Motor neuron (in vitro differentiated cells): ENCODE measurements at regions of chr4 and their contacts with region 1.

Region 1: GRCh38 chr4:13559413-13559812 is 15.1 kb upstream of the NKX3-2 start:
- ATAC-seq: no peak
- H3K4me3 ChIP-seq: no peak overlapping the region
- H3K27ac ChIP-seq: no peak overlapping the region
- H3K4me1 ChIP-seq: no peaks in the 10 kb centered on the region

Region 2: GRCh38 chr4:12293906-12294525 is 1265.4 kb before region 1 on chr4:
- in situ Hi-C with region 1: no loop called
- ATAC-seq: no peak
- H3K4me3 ChIP-seq: no peak overlapping the region
- H3K27ac ChIP-seq: no peak overlapping the region
- H3K4me1 ChIP-seq: no peaks in the 10 kb centered on the region

Region 3: GRCh38 chr4:12573716-12574115 is 985.7 kb before region 1 on chr4:
- in situ Hi-C with region 1: no loop called
- ATAC-seq: no peak
- H3K4me3 ChIP-seq: no peak overlapping the region
- H3K27ac ChIP-seq: no peak overlapping the region
- H3K4me1 ChIP-seq: peaks cover 0 to 3% of the 10 kb centered on the region in 2 donors

Region 4: DNA sequence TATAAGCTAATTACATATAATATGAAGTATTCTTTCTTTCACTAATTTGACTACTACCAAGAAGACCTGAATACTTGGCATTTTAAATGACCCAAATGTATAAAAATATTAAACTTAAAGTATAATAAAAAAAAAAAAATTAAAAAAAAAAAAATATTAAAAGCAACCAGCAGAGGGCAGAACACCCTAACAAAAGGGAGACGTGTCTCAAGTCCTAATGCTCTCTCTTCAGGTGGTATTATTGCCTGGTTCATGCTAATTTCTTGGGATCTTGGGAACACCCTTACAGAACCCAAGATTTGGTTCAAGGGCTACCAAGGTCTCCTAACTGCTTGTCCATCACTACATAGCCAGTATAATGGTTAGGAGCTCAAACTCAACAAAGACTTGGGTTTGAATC is 830.0 kb before region 1 on chr4:
- in situ Hi-C with region 1: loop called in 1 of 9 experiments (anchors 25 kb)
- ATAC-seq: peak in 1 of 8 experiments; percentile 23
- H3K4me3 ChIP-seq: no peak overlapping the region
- H3K27ac ChIP-seq: no peak overlapping the region
- H3K4me1 ChIP-seq: no peaks in the 10 kb centered on the region

Region 5: GRCh38 chr4:12852338-12853307 is 706.8 kb before region 1 on chr4:
- in situ Hi-C with region 1: loop called in 1 of 9 experiments (anchors 10 kb)
- ATAC-seq: peak; percentile 80 to 92 (median 91)
- H3K4me3 ChIP-seq: no peak overlapping the region
- H3K27ac ChIP-seq: no peak overlapping the region
- H3K4me1 ChIP-seq: peaks cover 3 to 7% of the 10 kb centered on the region in 2 donors

Region 6: GRCh38 chr4:14008494-14008893 is 449.1 kb after region 1 on chr4:
- in situ Hi-C with region 1: no loop called
- ATAC-seq: no peak
- H3K4me3 ChIP-seq: no peak overlapping the region
- H3K27ac ChIP-seq: no peak overlapping the region
- H3K4me1 ChIP-seq: no peaks in the 10 kb centered on the region